Activated CD4-positive, alpha-beta T cell treated with anti-CD3 and anti-CD28 coated beads, Interleukin-2, amount 10 ng/mL, durations not matched to agents 24 days and 14 days (primary cell): ENCODE measurements at regions of chr16 and their contacts with region 1.

Region 1: DNA sequence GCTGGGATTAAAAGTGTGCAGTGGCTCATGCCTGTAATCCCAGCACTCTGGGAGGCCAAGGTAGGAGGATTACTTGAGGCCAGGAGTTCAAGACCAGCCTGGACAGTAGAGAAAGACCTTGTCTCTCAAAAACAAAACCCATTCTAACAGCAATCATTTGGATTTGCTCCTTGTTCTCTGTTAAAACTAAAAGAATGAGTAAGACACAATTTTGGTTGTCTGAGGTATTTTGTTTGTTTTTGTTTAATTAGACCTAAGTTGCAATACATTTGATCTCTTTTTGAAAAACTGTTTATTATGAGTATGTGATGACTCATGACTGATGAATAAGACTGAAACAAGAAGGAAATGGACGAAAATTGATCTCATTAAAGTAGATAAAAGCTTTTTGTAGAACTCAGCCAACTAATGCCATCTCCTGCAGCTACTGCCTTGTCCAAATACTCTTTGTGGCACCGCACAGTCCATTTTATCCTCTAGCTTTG is 29.0 kb downstream of the GLG1 start:
- DNase-seq: no peak
- H3K4me3 Mint-ChIP-seq: peak overlapping the region; percentile 8
- H3K27ac Mint-ChIP-seq: peak overlapping the region; percentile 66
- H3K4me1 Mint-ChIP-seq: peaks cover 33% of the 10 kb centered on the region
- H3K27me3 Mint-ChIP-seq: no peaks in the 10 kb centered on the region

Region 2: GRCh38 chr16:74501484-74502479 is 76.1 kb before region 1 on chr16:
- intact Hi-C with region 1: loop called (anchors 10 kb)
- DNase-seq: no peak
- H3K4me3 Mint-ChIP-seq: no peak overlapping the region
- H3K27ac Mint-ChIP-seq: peak overlapping the region; percentile 41
- H3K4me1 Mint-ChIP-seq: peaks cover 8% of the 10 kb centered on the region
- H3K27me3 Mint-ChIP-seq: no peaks in the 10 kb centered on the region

Region 3: GRCh38 chr16:74616782-74617181 is 38.9 kb after region 1 on chr16:
- intact Hi-C with region 1: no loop called
- DNase-seq: no peak
- H3K4me3 Mint-ChIP-seq: no peak overlapping the region
- H3K27ac Mint-ChIP-seq: no peak overlapping the region
- H3K4me1 Mint-ChIP-seq: peaks cover 11% of the 10 kb centered on the region
- H3K27me3 Mint-ChIP-seq: no peaks in the 10 kb centered on the region

Region 4: GRCh38 chr16:74626741-74627416 is 49.0 kb after region 1 on chr16:
- intact Hi-C with region 1: loop called (anchors 1 kb)
- DNase-seq: no peak
- H3K4me3 Mint-ChIP-seq: peak overlapping the region; percentile 32
- H3K27ac Mint-ChIP-seq: peak overlapping the region; percentile 91
- H3K4me1 Mint-ChIP-seq: peaks cover 28% of the 10 kb centered on the region
- H3K27me3 Mint-ChIP-seq: no peaks in the 10 kb centered on the region